Cardiac septum (tissue), 1 donor: ENCODE measurements at regions of chr1 and their contacts with region 1.

Region 1: DNA sequence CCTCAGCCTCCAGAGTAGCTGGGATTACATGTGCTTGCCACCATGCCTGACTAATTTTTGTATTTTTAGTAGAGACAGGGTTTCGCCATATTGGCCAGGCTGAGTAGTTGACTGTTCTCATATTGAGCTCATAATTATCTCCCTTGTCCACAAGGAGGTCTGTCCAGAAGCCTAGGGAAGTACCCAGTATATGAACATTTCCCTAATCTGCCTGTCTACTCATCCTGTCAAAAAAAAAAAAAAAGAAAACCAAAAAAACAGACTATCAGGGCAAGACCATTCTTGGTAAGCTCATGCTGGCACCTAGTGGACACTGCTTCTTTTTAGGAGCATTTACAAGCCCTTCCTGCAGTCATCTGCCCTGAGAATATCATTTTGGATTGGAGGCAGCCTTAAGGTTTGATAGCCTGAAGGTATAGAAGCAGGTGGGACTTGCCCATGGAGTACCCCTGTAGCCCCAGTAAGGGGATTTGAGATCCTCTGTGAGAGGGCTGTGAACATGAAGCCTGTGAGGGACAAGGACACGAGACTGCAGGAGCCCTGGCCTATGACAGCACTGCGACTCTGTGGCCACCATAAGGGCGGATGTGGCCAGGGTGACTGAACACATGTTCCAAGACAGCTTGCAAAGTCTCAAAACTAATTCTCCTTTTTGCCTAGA is 10.8 kb upstream of the DUSP12 start:
- DNase-seq: peak; percentile 77

Region 2: GRCh38 chr1:161399257-161399998 is 339.3 kb before region 1 on chr1:
- intact Hi-C with region 1: loop called (anchors 10 kb)
- DNase-seq: peak; percentile 90